ENCODE measurements at regions of chr6 and their contacts with region 1.

Region 1: GRCh38 chr6:144215932-144216667 is 65.8 kb downstream of the STX11 start:
- DNase-seq: peak; percentile 93 to 96 (median 94)
- H3K4me3 ChIP-seq: peak overlapping the region; percentile 43 to 70
- H3K4me3 Mint-ChIP-seq: peak overlapping the region; percentile 89 to 99 (median 94)
- H3K27ac ChIP-seq: peak overlapping the region; percentile 73
- H3K27ac Mint-ChIP-seq: peak overlapping the region; percentile 98 to 100 (median 99)
- H3K4me1 ChIP-seq: peaks cover 31% of the 10 kb centered on the region
- H3K4me1 Mint-ChIP-seq: peaks cover 26 to 47% (median 36%) of the 10 kb centered on the region in 4 donors
- H3K27me3 ChIP-seq: no peaks in the 10 kb centered on the region
- H3K27me3 Mint-ChIP-seq: peaks cover 0 to 11% of the 10 kb centered on the region in 2 donors

Region 2: GRCh38 chr6:143575440-143575839 is 640.7 kb before region 1 on chr6:
- CTCF ChIA-PET with region 1: interaction called, 4 read pairs
- POLR2A ChIA-PET with region 1: no interaction called
- intact Hi-C with region 1: loop called (anchors 1 kb)
- DNase-seq: peak; percentile 54 to 72 (median 68)
- H3K4me3 ChIP-seq: no peak overlapping the region
- H3K4me3 Mint-ChIP-seq: no peak overlapping the region
- H3K27ac ChIP-seq: no peak overlapping the region
- H3K27ac Mint-ChIP-seq: peak overlapping the region in 4 of 7 donors; percentile 22 to 43 (median 32)
- H3K4me1 ChIP-seq: no peaks in the 10 kb centered on the region
- H3K4me1 Mint-ChIP-seq: peaks cover 11 to 35% (median 19%) of the 10 kb centered on the region in 4 donors
- H3K27me3 ChIP-seq: no peaks in the 10 kb centered on the region
- H3K27me3 Mint-ChIP-seq: no peaks in the 10 kb centered on the region

Region 3: GRCh38 chr6:143940011-143940597 is 276.0 kb before region 1 on chr6:
- CTCF ChIA-PET with region 1: interaction called, 12 read pairs
- POLR2A ChIA-PET with region 1: no interaction called
- intact Hi-C with region 1: loop called (anchors 1 kb)
- DNase-seq: peak; percentile 55 to 66 (median 58)
- H3K4me3 ChIP-seq: no peak overlapping the region
- H3K4me3 Mint-ChIP-seq: no peak overlapping the region
- H3K27ac ChIP-seq: no peak overlapping the region
- H3K27ac Mint-ChIP-seq: no peak overlapping the region
- H3K4me1 ChIP-seq: no peaks in the 10 kb centered on the region
- H3K4me1 Mint-ChIP-seq: peaks cover 4 to 7% (median 6%) of the 10 kb centered on the region in 4 donors
- H3K27me3 ChIP-seq: no peaks in the 10 kb centered on the region
- H3K27me3 Mint-ChIP-seq: peaks cover 4 to 5% of the 10 kb centered on the region in 2 donors

Region 4: DNA sequence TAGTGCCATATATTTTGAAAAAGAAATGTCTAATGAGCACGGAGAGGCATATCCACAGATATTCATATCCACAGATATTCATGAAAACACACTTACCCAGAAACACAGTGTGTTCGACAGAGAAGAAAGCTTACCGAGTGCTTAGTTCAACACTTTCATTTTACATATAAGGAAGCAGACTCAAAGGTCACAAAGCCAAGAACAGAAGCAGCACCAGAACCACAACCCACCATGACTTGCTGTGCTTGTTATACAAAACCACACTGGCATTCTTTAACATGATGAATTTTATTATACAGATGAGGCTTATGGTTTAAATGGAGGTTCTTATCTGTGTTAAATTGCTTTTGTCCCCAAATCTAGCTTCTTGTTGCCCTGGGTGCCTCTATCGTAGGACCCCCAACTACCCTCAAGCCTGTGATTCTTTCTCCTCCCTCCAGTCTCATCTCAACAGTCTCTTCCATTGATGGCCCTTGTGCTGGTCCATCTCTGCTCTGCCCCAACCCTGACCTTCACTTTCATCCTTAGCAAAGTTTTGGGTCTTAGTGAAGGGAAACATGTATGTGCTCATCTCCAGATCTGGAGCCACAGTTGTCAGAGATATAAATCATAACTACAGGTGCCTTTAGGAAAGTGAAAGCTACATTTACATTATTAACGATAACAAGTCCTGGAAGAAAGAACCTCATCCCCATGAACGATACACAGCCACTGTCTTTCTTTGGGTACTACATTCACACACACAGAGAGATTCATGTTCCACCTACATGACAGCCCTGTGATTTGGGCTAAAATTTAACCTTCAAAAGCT is 160.8 kb before region 1 on chr6:
- CTCF ChIA-PET with region 1: no interaction called
- POLR2A ChIA-PET with region 1: no interaction called
- intact Hi-C with region 1: loop called (anchors 2 kb)
- DNase-seq: peak; percentile 61 to 77 (median 72)
- H3K4me3 ChIP-seq: peak overlapping the region in 1 of 2 donors; percentile 46
- H3K4me3 Mint-ChIP-seq: peak overlapping the region; percentile 77 to 95 (median 89)
- H3K27ac ChIP-seq: peak overlapping the region; percentile 54
- H3K27ac Mint-ChIP-seq: peak overlapping the region; percentile 79 to 98 (median 96)
- H3K4me1 ChIP-seq: peaks cover 33% of the 10 kb centered on the region
- H3K4me1 Mint-ChIP-seq: peaks cover 28 to 39% (median 33%) of the 10 kb centered on the region in 4 donors
- H3K27me3 ChIP-seq: no peaks in the 10 kb centered on the region
- H3K27me3 Mint-ChIP-seq: no peaks in the 10 kb centered on the region

Region 5: GRCh38 chr6:144095331-144096002 is 120.6 kb before region 1 on chr6 and contains the start of gene SF3B5:
- CTCF ChIA-PET with region 1: interaction called, 5 read pairs
- POLR2A ChIA-PET with region 1: interaction called, 9 read pairs
- intact Hi-C with region 1: loop called (anchors 1 kb)
- DNase-seq: peak; percentile 96 to 100 (median 98)
- H3K4me3 ChIP-seq: peak within 1 kb of the TSS; percentile 88 to 95
- H3K4me3 Mint-ChIP-seq: peak within 1 kb of the TSS; percentile 94 to 99 (median 98)
- H3K27ac ChIP-seq: peak within 1 kb of the TSS; percentile 91
- H3K27ac Mint-ChIP-seq: peak within 1 kb of the TSS; percentile 96 to 100 (median 99)
- H3K4me1 ChIP-seq: peaks cover 17% of the 10 kb centered on the region
- H3K4me1 Mint-ChIP-seq: peaks cover 15 to 35% (median 24%) of the 10 kb centered on the region in 4 donors
- H3K27me3 ChIP-seq: no peaks in the 10 kb centered on the region
- H3K27me3 Mint-ChIP-seq: no peaks in the 10 kb centered on the region
- total RNA-seq, gene SF3B5: 87.2 to 91.7 TPM

Region 6: DNA sequence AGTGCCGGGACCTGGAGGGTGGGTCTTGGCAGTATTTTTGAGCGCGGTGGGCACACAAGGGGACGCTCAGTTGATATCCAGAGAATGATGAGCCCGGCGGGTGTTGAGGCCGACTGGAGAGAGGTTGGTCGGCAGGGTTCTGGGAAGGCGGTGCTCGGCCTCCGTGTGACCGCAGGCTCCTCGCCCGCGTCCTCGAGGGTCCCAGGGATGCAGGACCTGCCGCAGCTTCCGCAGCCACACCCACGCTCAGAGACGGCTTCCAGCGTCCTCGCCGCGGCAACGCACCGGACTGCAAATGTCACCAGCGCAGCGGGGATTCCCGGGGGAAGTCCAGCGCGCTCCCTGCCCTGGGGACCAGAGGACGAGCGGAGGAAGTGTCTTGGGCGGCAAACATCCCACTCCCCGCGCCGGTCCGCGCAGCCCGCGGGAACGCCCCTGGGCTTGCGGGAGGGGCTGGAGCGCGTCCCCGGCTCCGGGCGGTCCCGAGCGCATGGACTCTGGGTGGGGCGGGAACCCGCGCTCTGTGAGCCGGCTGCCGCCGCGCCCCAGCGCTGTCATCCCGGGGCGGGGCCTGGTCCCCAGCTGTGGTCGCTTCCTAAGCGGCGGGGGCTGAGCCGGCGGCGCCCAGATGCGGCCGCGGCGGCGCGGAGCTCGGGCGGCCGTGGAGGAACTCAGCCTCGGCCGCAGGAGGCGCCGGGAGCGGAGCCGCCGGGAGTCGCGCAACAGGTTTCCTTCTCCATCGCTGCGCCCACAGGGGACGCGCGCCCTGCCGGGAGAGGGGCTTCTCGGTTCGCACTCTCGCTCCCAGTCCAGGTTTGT is 66.0 kb before region 1 on chr6 and contains the start of gene STX11:
- CTCF ChIA-PET with region 1: interaction called, 6 read pairs
- POLR2A ChIA-PET with region 1: interaction called, 29 read pairs
- intact Hi-C with region 1: loop called (anchors 1 kb)
- DNase-seq: peak; percentile 64 to 78 (median 68)
- H3K4me3 ChIP-seq: peak within 1 kb of the TSS; percentile 63 to 84
- H3K4me3 Mint-ChIP-seq: peak within 1 kb of the TSS; percentile 95 to 97 (median 96)
- H3K27ac ChIP-seq: peak within 1 kb of the TSS; percentile 80
- H3K27ac Mint-ChIP-seq: peak within 1 kb of the TSS; percentile 85 to 98 (median 96)
- H3K4me1 ChIP-seq: peaks cover 29% of the 10 kb centered on the region
- H3K4me1 Mint-ChIP-seq: peaks cover 24 to 29% (median 27%) of the 10 kb centered on the region in 4 donors
- H3K27me3 ChIP-seq: no peaks in the 10 kb centered on the region
- H3K27me3 Mint-ChIP-seq: no peaks in the 10 kb centered on the region
- total RNA-seq, gene STX11: 5.7 to 6.2 TPM

Region 7: DNA sequence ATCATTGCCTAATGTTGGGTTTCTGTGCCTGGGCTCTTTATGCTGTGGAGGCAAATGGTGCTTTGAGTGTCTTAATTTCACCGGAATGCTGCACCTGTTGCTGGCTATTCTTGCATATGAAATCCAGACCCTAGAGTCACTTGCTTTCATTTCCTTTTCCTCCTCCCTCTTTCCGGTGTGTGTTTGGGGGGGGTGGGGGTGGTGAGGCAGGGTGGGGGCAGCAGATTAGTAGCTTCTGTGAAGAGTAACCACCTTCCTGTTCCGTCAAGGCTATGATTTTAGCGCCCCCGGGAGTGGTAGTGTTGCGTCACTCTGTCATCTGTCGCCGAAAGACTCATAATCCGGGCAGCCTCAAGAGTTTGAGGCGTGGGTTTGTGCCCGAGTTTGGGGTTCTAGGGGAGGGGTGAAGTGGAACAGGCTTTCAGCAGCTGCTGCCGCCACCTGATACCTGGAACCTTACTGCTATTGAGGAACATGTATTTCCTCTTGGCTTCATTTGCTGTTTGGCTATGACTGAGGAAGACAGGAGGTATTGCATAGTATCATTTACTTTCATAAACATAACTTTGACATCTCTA is 118.1 kb after region 1 on chr6:
- CTCF ChIA-PET with region 1: no interaction called
- POLR2A ChIA-PET with region 1: interaction called, 3 read pairs
- intact Hi-C with region 1: loop called (anchors 2 kb)
- DNase-seq: peak; percentile 75 to 88 (median 78)
- H3K4me3 ChIP-seq: peak overlapping the region in 1 of 2 donors; percentile 58
- H3K4me3 Mint-ChIP-seq: peak overlapping the region; percentile 73 to 90 (median 85)
- H3K27ac ChIP-seq: peak overlapping the region; percentile 64
- H3K27ac Mint-ChIP-seq: peak overlapping the region; percentile 86 to 97 (median 96)
- H3K4me1 ChIP-seq: peaks cover 38% of the 10 kb centered on the region
- H3K4me1 Mint-ChIP-seq: peaks cover 44 to 62% (median 53%) of the 10 kb centered on the region in 4 donors
- H3K27me3 ChIP-seq: no peaks in the 10 kb centered on the region
- H3K27me3 Mint-ChIP-seq: no peaks in the 10 kb centered on the region